Activated CD4-positive, alpha-beta T cell treated with anti-CD3 and anti-CD28 coated beads for 36 hours (primary cell): ENCODE measurements at regions of chr10 and their contacts with region 1.

Region 1: DNA sequence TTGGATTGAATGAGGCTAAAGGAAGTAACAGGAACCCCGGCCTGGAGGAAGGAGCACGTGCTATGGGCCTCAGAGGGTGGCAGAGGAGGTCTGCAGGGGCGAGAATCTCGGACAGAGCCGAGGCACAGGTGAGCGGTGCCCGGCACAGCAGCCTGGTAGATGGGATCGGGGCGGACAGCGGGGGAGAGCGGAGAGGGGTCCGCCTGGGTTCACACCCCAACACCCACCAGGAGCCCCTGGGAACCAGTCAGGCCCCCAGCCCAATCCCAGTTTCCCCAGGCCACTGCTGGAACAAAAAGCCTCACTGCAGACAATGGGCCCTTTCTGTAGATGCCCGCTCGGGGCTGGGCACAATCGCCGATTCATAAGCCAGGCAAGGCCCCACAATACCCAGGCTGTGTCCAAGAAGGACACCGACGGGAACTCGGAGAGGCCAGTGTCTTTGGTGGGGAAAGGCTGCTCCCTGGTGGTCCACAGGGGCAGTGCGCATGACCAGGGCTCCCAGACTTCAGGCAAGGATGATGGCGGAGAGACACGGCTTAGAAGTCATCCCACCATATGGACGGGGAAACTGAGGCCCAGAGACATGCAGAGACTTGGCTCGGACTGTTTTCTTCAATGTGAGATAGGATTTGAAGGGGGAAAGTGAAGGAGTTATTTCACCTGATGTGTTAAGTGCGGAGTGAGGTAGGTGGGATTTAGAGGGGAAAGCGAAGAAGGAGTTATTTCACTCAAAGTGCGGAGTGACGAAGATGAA is 106.9 kb upstream of the GPR26 start:
- DNase-seq: peak; percentile 79
- ATAC-seq: peak; percentile 70
- H3K4me3 Mint-ChIP-seq: no peak overlapping the region
- H3K27ac Mint-ChIP-seq: no peak overlapping the region
- H3K4me1 Mint-ChIP-seq: no peaks in the 10 kb centered on the region
- H3K27me3 Mint-ChIP-seq: peaks cover 15% of the 10 kb centered on the region

Region 2: GRCh38 chr10:122298598-122299301 is 1260.5 kb before region 1 on chr10:
- CTCF ChIA-PET with region 1: no interaction called
- POLR2A ChIA-PET with region 1: no interaction called
- intact Hi-C with region 1: loop called in 1 of 2 experiments (anchors 5 kb)
- DNase-seq: peak; percentile 80
- ATAC-seq: peak; percentile 94
- H3K4me3 Mint-ChIP-seq: no peak overlapping the region
- H3K27ac Mint-ChIP-seq: no peak overlapping the region
- H3K4me1 Mint-ChIP-seq: peaks cover 5% of the 10 kb centered on the region
- H3K27me3 Mint-ChIP-seq: peaks cover 3% of the 10 kb centered on the region

Region 3: DNA sequence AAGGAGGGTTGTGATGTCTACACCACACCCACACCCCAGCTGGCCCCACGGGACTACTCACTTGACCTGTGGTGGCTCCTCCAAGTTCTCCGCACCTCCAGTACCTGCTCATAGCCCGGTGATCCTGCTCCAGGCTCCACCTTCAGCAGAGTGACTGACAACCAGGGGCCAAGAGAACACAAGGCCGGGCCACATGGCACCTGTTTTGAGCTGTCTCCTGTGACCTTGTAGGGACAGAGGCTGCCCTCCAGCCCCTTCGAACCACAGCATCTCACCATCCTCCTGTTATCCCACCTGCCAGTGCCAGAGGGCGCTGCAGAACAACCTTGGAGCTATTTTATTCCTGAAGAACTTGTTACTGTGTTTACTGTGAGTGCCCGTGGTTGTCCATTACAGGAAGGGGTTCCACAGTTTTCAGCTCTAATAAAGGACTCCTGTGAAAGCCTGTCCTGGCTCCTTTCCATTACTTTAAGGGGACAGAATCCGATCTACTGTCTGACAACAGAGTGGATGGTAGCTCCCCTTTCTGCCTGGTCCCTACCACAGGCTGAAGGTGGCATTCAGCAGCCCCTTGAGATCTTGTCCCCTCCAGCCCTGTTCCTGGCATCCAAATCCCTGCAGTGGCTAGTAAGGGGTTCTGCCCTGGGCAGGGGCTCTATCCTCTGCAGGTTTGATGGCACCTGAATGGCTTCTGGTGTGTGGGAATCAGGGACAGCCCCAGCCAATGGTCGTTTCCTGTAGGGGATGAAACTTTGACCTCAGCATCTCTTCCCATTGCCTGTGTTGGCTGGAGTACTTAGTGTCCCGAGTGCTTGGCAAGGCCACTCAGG is 910.4 kb before region 1 on chr10:
- CTCF ChIA-PET with region 1: no interaction called
- POLR2A ChIA-PET with region 1: no interaction called
- intact Hi-C with region 1: loop called in 1 of 2 experiments (anchors 1 kb)
- DNase-seq: peak; percentile 62
- ATAC-seq: peak; percentile 39
- H3K4me3 Mint-ChIP-seq: no peak overlapping the region
- H3K27ac Mint-ChIP-seq: no peak overlapping the region
- H3K4me1 Mint-ChIP-seq: no peaks in the 10 kb centered on the region
- H3K27me3 Mint-ChIP-seq: peaks cover 29% of the 10 kb centered on the region

Region 4: DNA sequence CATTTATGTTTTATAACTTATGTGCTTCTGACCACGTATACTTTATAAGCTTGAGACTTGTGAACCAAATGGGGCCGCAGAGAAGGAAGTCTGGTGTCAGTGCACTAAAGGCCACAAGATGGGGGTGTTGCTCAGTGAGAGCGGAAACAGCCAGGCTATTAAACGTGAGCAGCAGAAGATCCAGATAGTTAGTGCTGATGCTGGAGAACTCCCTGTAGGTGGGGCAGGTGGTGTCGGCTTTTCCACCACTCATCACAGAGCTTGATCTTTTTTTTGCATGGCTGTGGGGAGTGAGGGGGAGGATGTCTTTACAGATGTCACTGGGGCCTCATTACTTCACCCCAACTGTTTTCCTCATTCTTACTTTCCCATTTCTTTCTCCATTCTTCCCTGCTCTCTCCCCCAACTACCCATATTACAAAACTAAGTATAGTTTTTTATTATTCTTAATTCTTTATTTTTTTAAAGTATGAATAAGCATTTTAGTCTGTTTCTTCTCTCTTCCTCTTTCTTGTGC is 515.8 kb before region 1 on chr10:
- CTCF ChIA-PET with region 1: interaction called, 8 read pairs
- POLR2A ChIA-PET with region 1: no interaction called
- intact Hi-C with region 1: loop called (anchors 1 to 2 kb)
- DNase-seq: peak; percentile 61
- ATAC-seq: peak; percentile 83
- H3K4me3 Mint-ChIP-seq: no peak overlapping the region
- H3K27ac Mint-ChIP-seq: no peak overlapping the region
- H3K4me1 Mint-ChIP-seq: peaks cover 9% of the 10 kb centered on the region
- H3K27me3 Mint-ChIP-seq: no peaks in the 10 kb centered on the region

Region 5: DNA sequence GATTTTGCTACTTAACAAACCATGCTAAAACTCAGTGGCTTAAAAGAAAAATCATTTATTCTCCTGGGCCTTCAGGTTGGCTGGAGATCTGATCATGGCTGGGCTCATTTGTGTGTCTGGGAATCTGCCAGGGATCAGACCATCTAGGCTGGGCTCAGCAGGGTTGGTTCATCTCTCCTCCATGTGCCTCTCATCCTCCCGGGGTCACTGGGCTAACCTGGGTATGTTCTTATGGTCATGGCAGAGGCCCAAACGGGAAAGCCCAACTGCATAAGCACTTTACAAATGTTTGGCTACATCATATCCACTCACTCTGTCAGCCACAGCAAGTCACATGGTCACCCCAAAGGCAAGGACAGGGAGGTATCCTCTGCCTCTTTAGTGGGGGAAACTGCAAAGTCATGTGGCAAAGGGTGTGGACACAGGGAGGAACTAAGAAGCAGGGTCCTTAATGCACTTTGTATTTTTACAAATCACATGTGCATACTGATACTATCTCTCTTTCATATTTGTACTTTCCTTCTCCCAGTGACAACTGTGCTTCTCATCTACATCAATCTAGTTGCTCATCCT is 173.7 kb before region 1 on chr10:
- CTCF ChIA-PET with region 1: no interaction called
- POLR2A ChIA-PET with region 1: no interaction called
- intact Hi-C with region 1: loop called in 1 of 2 experiments (anchors 5 kb)
- DNase-seq: no peak
- ATAC-seq: no peak
- H3K4me3 Mint-ChIP-seq: no peak overlapping the region
- H3K27ac Mint-ChIP-seq: no peak overlapping the region
- H3K4me1 Mint-ChIP-seq: no peaks in the 10 kb centered on the region
- H3K27me3 Mint-ChIP-seq: peaks cover 9% of the 10 kb centered on the region